ENCODE measurements at regions of chr7 and their contacts with region 1.

Region 1: GRCh38 chr7:7512861-7513597 is 22.6 kb downstream of the COL28A1 start:
- DNase-seq: no peak

Region 2: DNA sequence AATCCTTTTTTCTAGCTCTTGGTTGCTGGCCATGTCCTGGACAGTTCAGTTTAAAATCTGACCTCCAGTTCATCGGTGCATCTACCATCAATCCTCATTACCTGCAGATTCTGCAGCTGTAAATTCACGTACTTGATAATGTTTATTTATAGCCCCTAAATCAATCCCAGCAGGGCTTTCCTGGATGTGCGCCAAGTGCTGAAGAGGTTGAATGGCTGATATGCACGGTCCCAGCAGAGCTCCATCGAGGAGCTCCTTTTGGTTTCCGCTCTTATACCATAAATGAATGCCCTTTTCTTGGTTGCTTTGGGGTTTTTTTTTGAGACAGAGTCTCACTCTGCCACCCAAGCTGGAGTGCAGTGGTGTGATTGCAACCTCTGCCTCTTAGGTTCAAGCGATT is 595.8 kb before region 1 on chr7:
- intact Hi-C with region 1: no loop called
- DNase-seq: peak in 1 of 10 donors; percentile 18

Region 3: DNA sequence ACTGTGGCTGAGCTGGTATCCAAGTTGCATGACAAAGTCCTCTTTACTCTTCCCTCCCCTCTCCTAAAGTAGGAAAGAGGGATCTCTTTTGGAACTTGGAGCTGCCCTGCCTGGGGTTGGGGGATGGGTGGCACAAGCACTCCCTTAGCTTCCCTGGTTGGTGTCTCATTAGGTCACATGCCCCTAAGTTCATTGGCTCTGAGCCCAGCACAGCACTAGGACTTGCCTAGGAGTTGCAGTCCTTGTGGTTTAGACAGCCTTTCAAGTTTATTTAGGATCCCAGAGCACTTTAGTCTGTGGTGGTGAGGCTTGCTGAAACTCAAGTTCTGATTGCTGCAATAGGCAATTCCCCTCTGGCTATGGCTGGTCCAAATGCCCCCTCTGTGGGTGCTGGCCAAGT is 1201.8 kb after region 1 on chr7:
- intact Hi-C with region 1: loop called (anchors 10 kb)
- DNase-seq: no peak

Measured in posterior cingulate gyrus (tissue), 11 donors.